H1 (cell line): ENCODE measurements at regions of chr7 and their contacts with region 1.

Region 1: DNA sequence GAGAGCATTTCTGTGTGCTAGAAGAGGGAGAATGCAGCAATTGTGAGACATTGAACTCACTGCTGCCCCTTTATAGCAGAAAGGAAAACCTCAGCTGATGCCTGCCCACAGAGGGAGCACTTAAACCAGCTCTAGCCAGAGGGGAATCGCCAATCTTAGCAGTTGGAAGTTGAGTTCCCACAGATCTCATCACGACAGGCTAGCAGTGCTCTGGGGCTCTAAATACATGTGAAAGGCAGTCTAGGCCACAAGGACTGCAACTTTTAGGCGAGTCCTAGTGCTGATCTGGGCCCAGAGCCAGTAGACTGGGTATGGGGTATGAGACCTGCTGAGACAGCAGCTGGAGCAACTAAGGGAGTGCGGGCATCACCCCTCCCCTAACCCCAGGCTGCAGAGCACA is 25.2 kb upstream of the PRR15 start:
- DNase-seq: no peak
- H3K4me3 ChIP-seq: no peak overlapping the region
- H3K27ac ChIP-seq: no peak overlapping the region
- H3K4me1 ChIP-seq: peaks cover 0 to 5% (median 0%) of the 10 kb centered on the region in 4 experiments; a peak in 3 of 7 replicates
- H3K27me3 ChIP-seq: no peaks in the 10 kb centered on the region
- CTCF ChIP-seq: peak in 2 of 3 experiments; percentile 19 to 23; a peak in 2 of 4 replicates
- EP300 ChIP-seq: no peak
- POLR2A ChIP-seq: no peak
- RAD21 ChIP-seq: peak in 1 of 2 experiments; percentile 25; a peak in 1 of 4 replicates

Region 2: GRCh38 chr7:29527505-29528108 is 10.8 kb before region 1 on chr7:
- CTCF ChIA-PET with region 1: interaction called, 18 read pairs
- POLR2A ChIA-PET with region 1: interaction called, 5 read pairs
- DNase-seq: no peak
- H3K4me3 ChIP-seq: no peak overlapping the region
- H3K27ac ChIP-seq: no peak overlapping the region
- H3K4me1 ChIP-seq: peaks cover 0 to 5% (median 0%) of the 10 kb centered on the region in 4 experiments; a peak in 2 of 7 replicates
- H3K27me3 ChIP-seq: no peaks in the 10 kb centered on the region; a peak in 1 of 7 replicates
- CTCF ChIP-seq: no peak
- EP300 ChIP-seq: no peak
- POLR2A ChIP-seq: no peak
- RAD21 ChIP-seq: no peak

Region 3: GRCh38 chr7:29598628-29599425 is 60.4 kb after region 1 on chr7:
- CTCF ChIA-PET with region 1: no interaction called
- POLR2A ChIA-PET with region 1: no interaction called
- DNase-seq: no peak
- H3K4me3 ChIP-seq: no peak overlapping the region
- H3K27ac ChIP-seq: no peak overlapping the region
- H3K4me1 ChIP-seq: peaks cover 0 to 2% (median 1%) of the 10 kb centered on the region in 4 experiments; a peak in 2 of 7 replicates
- H3K27me3 ChIP-seq: no peaks in the 10 kb centered on the region
- CTCF ChIP-seq: no peak
- EP300 ChIP-seq: no peak
- POLR2A ChIP-seq: no peak
- RAD21 ChIP-seq: no peak

Region 4: DNA sequence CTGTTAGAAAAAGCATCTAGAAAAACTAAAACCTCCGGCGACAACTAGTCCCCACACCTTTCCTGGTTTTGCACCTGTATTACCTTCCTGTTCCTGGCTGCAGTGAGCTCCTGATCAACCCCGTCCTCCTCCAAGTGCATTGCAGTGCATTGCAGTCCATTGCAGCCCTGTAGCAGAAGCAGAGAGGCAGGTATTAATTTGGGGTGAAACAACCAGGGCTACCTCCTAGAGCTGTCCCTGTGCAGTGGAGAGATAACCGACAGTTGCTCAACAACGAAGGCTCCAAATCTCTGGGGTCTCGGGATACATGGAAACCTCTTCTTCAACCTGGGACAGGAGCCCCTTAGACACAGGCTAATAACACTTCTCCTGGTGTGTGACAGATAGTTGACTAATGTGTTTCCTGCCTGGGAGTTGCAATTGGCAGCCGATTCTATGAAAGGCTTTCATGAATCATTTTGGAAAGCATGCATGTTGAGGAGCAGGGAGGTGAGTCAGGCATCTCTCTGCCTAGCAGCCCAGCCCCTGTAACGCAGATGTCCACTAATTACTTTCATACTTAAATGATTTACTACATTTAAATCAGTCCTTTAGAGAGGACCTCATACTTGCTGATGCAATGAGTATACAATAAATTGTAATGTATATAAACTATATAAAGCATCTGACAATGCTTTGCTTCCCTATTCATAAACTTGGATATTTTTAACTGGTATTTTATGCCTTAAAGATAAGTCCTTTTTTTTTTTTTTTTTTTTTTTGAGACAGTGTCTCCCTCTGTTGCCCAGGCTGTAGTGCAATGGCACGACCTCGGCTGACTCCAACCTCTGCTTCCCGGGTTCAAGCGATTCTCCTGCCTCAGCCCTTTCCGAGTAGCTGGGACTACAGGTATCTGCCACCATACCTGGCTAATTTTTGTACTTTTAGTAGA is 84.2 kb after region 1 on chr7:
- CTCF ChIA-PET with region 1: no interaction called
- POLR2A ChIA-PET with region 1: no interaction called
- DNase-seq: no peak
- H3K4me3 ChIP-seq: no peak overlapping the region
- H3K27ac ChIP-seq: no peak overlapping the region
- H3K4me1 ChIP-seq: peaks cover 2 to 5% (median 4%) of the 10 kb centered on the region in 4 experiments; a peak in 4 of 7 replicates
- H3K27me3 ChIP-seq: no peaks in the 10 kb centered on the region
- CTCF ChIP-seq: no peak
- EP300 ChIP-seq: no peak
- POLR2A ChIP-seq: no peak
- RAD21 ChIP-seq: no peak

Region 5: GRCh38 chr7:29825775-29826529 is 287.6 kb after region 1 on chr7:
- CTCF ChIA-PET with region 1: no interaction called
- POLR2A ChIA-PET with region 1: no interaction called
- DNase-seq: peak in 1 of 2 experiments; percentile 42
- H3K4me3 ChIP-seq: no peak overlapping the region
- H3K27ac ChIP-seq: no peak overlapping the region
- H3K4me1 ChIP-seq: peaks cover 0 to 7% (median 5%) of the 10 kb centered on the region in 4 experiments; a peak in 5 of 7 replicates
- H3K27me3 ChIP-seq: no peaks in the 10 kb centered on the region
- CTCF ChIP-seq: no peak
- EP300 ChIP-seq: no peak
- POLR2A ChIP-seq: no peak
- RAD21 ChIP-seq: no peak